ENCODE measurements at regions of chrX and their contacts with region 1.

Region 1: DNA sequence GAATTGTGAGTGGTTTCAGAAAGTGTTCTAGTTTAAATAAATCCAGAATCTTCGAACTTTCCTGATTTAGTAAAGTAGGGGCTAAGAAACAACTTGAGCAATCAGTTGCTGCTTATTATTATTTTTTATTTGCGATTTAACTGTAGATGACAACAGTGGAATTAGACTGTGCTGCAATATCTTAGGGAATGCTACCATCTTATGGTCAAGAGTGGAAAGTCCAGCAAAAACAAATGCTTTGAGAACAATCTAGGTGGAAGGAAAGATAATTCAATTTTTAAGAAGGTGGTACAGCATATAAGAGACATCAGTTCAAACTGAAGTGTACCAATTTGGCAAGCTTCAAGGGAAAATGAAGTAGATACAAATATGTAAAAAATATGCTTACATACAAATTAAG is 73.3 kb downstream of the CYLC1 start:
- DNase-seq: peak in 1 of 2 experiments; percentile 4
- H3K4me3 ChIP-seq: no peak overlapping the region
- H3K4me3 Mint-ChIP-seq: no peak overlapping the region
- H3K27ac Mint-ChIP-seq: no peak overlapping the region
- H3K4me1 ChIP-seq: no peaks in the 10 kb centered on the region
- H3K4me1 Mint-ChIP-seq: no peaks in the 10 kb centered on the region
- H3K27me3 ChIP-seq: no peaks in the 10 kb centered on the region
- H3K27me3 Mint-ChIP-seq: no peaks in the 10 kb centered on the region
- CTCF ChIP-seq: no peak

Region 2: DNA sequence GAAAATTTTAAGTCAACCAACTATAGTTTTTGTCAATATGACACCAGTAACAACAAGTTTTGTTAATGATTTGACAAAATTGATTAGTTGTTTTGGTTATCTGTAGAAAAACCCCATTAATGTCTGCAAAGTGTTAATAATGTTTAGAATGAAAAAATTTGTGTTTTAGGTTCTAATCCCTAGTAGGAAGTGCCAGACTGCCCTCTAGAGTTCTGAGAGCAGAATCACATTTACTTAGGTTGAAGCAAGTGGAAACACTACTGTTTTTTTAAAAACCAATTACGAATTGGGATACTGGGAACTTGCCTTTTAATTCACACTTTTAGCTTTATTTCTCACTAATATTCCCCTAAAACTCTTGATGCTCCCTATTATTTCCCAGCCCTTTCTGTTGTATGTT is 174.3 kb before region 1 on chrX:
- CTCF ChIA-PET with region 1: no interaction called
- POLR2A ChIA-PET with region 1: no interaction called
- intact Hi-C with region 1: no loop called
- DNase-seq: no peak
- H3K4me3 ChIP-seq: no peak overlapping the region
- H3K4me3 Mint-ChIP-seq: no peak overlapping the region
- H3K27ac Mint-ChIP-seq: no peak overlapping the region
- H3K4me1 ChIP-seq: no peaks in the 10 kb centered on the region
- H3K4me1 Mint-ChIP-seq: no peaks in the 10 kb centered on the region
- H3K27me3 ChIP-seq: no peaks in the 10 kb centered on the region
- H3K27me3 Mint-ChIP-seq: no peaks in the 10 kb centered on the region
- CTCF ChIP-seq: peak in 1 of 2 experiments; percentile 37

Region 3: DNA sequence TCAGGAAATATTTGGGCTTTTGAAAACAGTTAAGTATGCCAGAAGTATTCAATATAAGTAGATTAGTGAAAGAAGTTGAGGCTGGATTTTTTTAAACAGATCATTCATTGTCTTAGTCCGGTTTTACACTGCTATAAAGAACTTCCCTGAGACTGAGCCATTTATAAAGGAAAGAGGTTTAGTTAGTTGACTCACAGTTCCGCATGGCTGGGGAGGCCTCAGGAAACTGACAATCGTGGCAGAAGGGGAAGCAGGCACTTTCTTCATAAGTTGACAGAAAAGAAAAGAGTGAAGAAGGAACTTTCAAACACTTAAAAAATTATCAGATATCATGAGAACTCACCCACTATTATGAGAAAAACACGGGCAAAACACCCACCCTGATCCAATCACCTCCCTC is 104.3 kb before region 1 on chrX:
- CTCF ChIA-PET with region 1: no interaction called
- POLR2A ChIA-PET with region 1: no interaction called
- intact Hi-C with region 1: no loop called
- DNase-seq: no peak
- H3K4me3 ChIP-seq: no peak overlapping the region
- H3K4me3 Mint-ChIP-seq: no peak overlapping the region
- H3K27ac Mint-ChIP-seq: no peak overlapping the region
- H3K4me1 ChIP-seq: no peaks in the 10 kb centered on the region
- H3K4me1 Mint-ChIP-seq: no peaks in the 10 kb centered on the region
- H3K27me3 ChIP-seq: no peaks in the 10 kb centered on the region
- H3K27me3 Mint-ChIP-seq: peaks cover 3% of the 10 kb centered on the region
- CTCF ChIP-seq: no peak

Region 4: DNA sequence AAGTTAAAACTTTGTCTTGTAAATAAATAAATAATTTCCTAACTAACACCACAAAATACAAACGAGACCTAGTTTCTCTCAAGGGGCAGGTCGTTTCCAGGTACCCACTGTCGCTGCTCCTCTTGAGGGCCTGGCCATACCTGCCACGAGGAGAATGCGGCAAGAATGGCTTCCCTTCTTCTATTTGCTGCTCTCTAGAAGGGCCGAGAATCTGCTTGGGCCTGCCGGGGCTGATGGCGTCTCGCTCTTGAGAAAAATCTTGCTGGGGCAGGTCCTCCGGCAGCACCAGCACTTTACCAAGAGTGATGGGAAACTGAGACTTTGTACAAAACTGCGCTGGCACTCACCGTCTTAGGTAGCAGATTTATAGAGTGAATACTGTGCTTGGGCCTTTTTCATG is 41.8 kb before region 1 on chrX:
- CTCF ChIA-PET with region 1: no interaction called
- POLR2A ChIA-PET with region 1: no interaction called
- intact Hi-C with region 1: no loop called
- DNase-seq: no peak
- H3K4me3 ChIP-seq: no peak overlapping the region
- H3K4me3 Mint-ChIP-seq: no peak overlapping the region
- H3K27ac Mint-ChIP-seq: no peak overlapping the region
- H3K4me1 ChIP-seq: no peaks in the 10 kb centered on the region
- H3K4me1 Mint-ChIP-seq: no peaks in the 10 kb centered on the region
- H3K27me3 ChIP-seq: no peaks in the 10 kb centered on the region
- H3K27me3 Mint-ChIP-seq: no peaks in the 10 kb centered on the region
- CTCF ChIP-seq: no peak

Region 5: DNA sequence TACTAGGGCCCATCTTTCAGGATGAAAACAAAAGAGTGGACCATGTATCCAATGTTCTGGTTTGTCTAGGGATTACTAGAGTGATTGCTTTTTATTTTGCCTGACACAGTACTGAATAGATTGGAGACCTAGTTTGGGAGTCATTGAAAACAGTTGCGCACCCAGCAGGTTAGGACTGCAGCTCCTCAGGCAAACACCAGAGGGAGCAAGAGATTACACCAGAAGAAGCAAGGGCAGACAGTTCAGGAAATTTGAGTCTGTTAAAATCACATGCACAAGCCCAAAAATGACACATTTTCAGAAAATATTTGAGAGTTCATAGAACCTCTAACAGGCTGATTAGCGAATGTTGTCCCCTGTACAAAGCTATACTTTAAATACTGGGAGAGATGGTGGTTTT is 17.7 kb before region 1 on chrX:
- CTCF ChIA-PET with region 1: no interaction called
- POLR2A ChIA-PET with region 1: no interaction called
- intact Hi-C with region 1: loop called (anchors 1 kb)
- DNase-seq: peak in 1 of 2 experiments; percentile 26
- H3K4me3 ChIP-seq: no peak overlapping the region
- H3K4me3 Mint-ChIP-seq: no peak overlapping the region
- H3K27ac Mint-ChIP-seq: no peak overlapping the region
- H3K4me1 ChIP-seq: no peaks in the 10 kb centered on the region
- H3K4me1 Mint-ChIP-seq: no peaks in the 10 kb centered on the region
- H3K27me3 ChIP-seq: no peaks in the 10 kb centered on the region
- H3K27me3 Mint-ChIP-seq: no peaks in the 10 kb centered on the region
- CTCF ChIP-seq: peak; percentile 49 to 66

Region 6: DNA sequence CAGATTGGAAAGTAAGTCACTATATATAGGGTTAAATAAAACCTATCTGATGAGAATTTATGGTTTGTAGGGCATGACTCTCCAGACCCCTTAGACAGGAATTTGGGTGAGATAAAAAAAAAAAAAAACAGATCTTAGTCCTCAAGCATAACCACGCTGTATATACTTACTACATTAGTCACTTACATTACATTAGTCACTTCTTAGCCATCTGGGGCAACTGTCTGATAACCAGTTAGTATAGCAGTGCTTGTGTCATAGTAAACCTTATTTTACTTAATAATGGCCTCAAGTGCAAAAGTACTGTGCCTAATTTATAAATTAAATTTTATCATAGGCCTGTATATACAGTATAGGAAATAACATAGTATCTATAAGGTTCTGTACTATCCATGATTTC is 314.0 kb after region 1 on chrX:
- CTCF ChIA-PET with region 1: no interaction called
- POLR2A ChIA-PET with region 1: no interaction called
- intact Hi-C with region 1: no loop called
- DNase-seq: no peak
- H3K4me3 ChIP-seq: no peak overlapping the region
- H3K4me3 Mint-ChIP-seq: no peak overlapping the region
- H3K27ac Mint-ChIP-seq: no peak overlapping the region
- H3K4me1 ChIP-seq: peaks cover 12% of the 10 kb centered on the region; the same call in 1 of the 2 replicates
- H3K4me1 Mint-ChIP-seq: peaks cover 11% of the 10 kb centered on the region
- H3K27me3 ChIP-seq: no peaks in the 10 kb centered on the region
- H3K27me3 Mint-ChIP-seq: no peaks in the 10 kb centered on the region
- CTCF ChIP-seq: no peak